Activated CD4-positive, alpha-beta memory T cell treated with anti-CD3 and anti-CD28 coated beads for 36 hours (primary cell): ENCODE measurements at regions of chr6 and their contacts with region 1.

Region 1: DNA sequence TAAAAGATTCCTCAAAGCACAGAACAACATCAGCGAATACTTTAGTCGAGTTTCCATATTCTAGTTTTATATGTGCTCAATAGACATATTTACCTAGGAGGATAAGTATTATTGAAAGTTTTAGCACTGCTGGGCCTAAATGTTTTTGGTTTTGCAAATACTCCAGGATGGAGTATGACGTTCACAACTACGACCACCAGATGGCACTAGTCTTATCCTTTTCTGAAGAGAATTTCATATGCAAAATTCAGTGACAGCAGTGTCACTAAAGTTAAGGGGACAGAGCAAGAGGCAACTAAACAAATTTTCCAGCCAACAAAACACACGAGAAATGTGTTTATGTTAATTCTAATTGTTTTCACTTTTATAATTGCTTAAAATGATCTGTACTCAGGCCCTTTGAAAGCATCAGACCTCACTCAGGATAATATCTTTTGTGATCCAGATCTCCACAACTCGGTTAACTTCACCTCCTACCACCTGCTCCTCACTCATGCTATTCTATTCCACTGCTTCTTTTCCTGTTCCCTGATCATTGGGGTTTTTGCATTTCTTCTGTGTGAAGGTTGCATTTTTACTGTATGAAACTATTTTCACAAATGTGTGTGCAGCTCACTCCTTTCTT is 220.8 kb downstream of the TRDN start:
- DNase-seq: peak; percentile 30
- H3K4me3 Mint-ChIP-seq: no peak overlapping the region
- H3K27ac Mint-ChIP-seq: no peak overlapping the region
- H3K4me1 Mint-ChIP-seq: no peaks in the 10 kb centered on the region
- H3K27me3 Mint-ChIP-seq: no peaks in the 10 kb centered on the region

Region 2: GRCh38 chr6:123233336-123233735 is 182.6 kb before region 1 on chr6:
- CTCF ChIA-PET with region 1: no interaction called
- POLR2A ChIA-PET with region 1: no interaction called
- intact Hi-C with region 1: no loop called
- DNase-seq: no peak
- H3K4me3 Mint-ChIP-seq: no peak overlapping the region
- H3K27ac Mint-ChIP-seq: no peak overlapping the region
- H3K4me1 Mint-ChIP-seq: no peaks in the 10 kb centered on the region
- H3K27me3 Mint-ChIP-seq: no peaks in the 10 kb centered on the region

Region 3: DNA sequence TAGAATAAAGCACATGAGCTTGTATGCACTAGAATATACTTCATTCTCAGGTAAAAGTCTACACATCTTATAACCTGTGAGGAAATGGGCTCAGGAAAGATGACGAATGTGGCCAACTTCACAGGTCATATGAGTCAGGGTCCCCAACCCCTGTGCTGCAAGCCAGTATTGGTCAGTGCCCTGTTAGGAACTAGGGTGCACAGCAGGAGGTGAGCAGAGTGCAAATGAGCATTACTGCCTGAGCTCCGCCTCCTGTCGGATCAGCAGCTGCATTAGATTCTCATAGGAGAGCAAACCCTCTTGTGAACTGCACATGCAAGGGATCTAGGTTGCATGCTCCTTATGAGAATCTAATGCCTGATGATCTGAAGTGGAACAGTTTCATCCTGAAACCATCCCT is 38.5 kb after region 1 on chr6:
- CTCF ChIA-PET with region 1: no interaction called
- POLR2A ChIA-PET with region 1: no interaction called
- intact Hi-C with region 1: no loop called
- DNase-seq: no peak
- H3K4me3 Mint-ChIP-seq: no peak overlapping the region
- H3K27ac Mint-ChIP-seq: no peak overlapping the region
- H3K4me1 Mint-ChIP-seq: no peaks in the 10 kb centered on the region
- H3K27me3 Mint-ChIP-seq: no peaks in the 10 kb centered on the region

Region 4: DNA sequence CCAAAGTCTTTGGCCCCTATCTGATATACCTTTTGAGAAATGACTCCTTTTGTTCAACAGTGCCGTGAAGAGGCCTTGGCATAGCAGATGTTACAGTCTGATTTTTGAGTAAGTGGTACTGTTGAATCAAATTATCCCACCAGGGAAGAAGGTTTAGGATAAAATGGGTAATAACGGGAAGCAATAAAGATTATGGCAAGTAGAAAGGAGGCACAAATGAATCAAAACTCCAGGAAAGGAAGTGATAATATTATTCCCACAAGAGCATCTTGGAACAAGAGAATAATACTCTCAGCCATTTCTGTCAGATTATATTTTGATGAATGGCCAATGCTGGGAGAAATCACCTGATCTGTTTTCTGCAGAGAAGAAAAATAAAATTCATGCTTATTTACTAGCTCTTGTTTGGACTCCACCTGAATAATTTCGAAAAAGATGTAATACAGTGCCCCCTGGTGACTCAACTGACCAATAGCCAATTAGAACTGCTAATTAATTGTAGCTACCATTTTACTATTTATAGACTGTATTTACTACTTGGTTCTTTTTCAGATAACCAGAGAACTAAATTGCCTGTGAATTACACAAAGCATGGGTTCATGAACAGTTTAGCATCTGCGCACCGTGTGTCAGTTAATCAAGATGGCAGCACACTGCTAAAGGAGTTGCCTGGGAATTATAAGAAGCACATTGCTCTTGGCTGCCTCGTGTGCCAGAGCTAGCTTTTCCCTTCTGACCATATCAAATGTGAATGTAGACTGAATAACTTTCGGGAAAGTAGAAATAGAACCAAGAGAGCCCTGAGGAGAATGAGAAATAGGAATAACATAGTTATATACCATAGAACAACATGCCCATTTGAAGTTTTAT is 299.3 kb after region 1 on chr6:
- CTCF ChIA-PET with region 1: interaction called, 11 read pairs
- POLR2A ChIA-PET with region 1: no interaction called
- intact Hi-C with region 1: loop called (anchors 1 kb)
- DNase-seq: no peak
- H3K4me3 Mint-ChIP-seq: no peak overlapping the region
- H3K27ac Mint-ChIP-seq: no peak overlapping the region
- H3K4me1 Mint-ChIP-seq: no peaks in the 10 kb centered on the region
- H3K27me3 Mint-ChIP-seq: no peaks in the 10 kb centered on the region